Adrenal gland (tissue), 19 donors: ENCODE measurements at regions of chr18 and their contacts with region 1.

Region 1: GRCh38 chr18:3593904-3594661 is 144.1 kb downstream of the TGIF1 start:
- DNase-seq: peak; percentile 89 to 98 (median 95)
- H3K4me3 ChIP-seq: peak overlapping the region in 3 of 4 donors; percentile 1 to 59 (median 19)
- H3K27ac ChIP-seq: peak overlapping the region; percentile 93 to 98 (median 96)
- H3K4me1 ChIP-seq: peaks cover 45 to 51% of the 10 kb centered on the region in 2 donors
- H3K27me3 ChIP-seq: no peaks in the 10 kb centered on the region
- CTCF ChIP-seq: peak; percentile 84 to 94 (median 92)
- POLR2A ChIP-seq: peak; percentile 77 to 90

Region 2: GRCh38 chr18:3281456-3282400 is 312.4 kb before region 1 on chr18:
- intact Hi-C with region 1: loop called in 1 of 2 experiments (anchors 5 kb)
- DNase-seq: no peak
- H3K4me3 ChIP-seq: no peak overlapping the region
- H3K27ac ChIP-seq: no peak overlapping the region
- H3K4me1 ChIP-seq: peaks cover 5 to 7% of the 10 kb centered on the region in 2 donors
- H3K27me3 ChIP-seq: no peaks in the 10 kb centered on the region
- CTCF ChIP-seq: peak; percentile 59 to 92 (median 74)
- POLR2A ChIP-seq: no peak

Region 3: GRCh38 chr18:3679241-3679640 is 85.2 kb after region 1 on chr18:
- intact Hi-C with region 1: no loop called
- DNase-seq: no peak
- H3K4me3 ChIP-seq: no peak overlapping the region
- H3K27ac ChIP-seq: no peak overlapping the region
- H3K4me1 ChIP-seq: no peaks in the 10 kb centered on the region
- H3K27me3 ChIP-seq: no peaks in the 10 kb centered on the region
- CTCF ChIP-seq: no peak
- POLR2A ChIP-seq: no peak

Region 4: GRCh38 chr18:4172196-4173100 is 578.4 kb after region 1 on chr18:
- intact Hi-C with region 1: no loop called
- DNase-seq: no peak
- H3K4me3 ChIP-seq: no peak overlapping the region
- H3K27ac ChIP-seq: no peak overlapping the region
- H3K4me1 ChIP-seq: no peaks in the 10 kb centered on the region
- H3K27me3 ChIP-seq: no peaks in the 10 kb centered on the region
- CTCF ChIP-seq: no peak
- POLR2A ChIP-seq: no peak